Activated CD4-positive, alpha-beta T cell treated with anti-CD3 and anti-CD28 coated beads, Interleukin-2, amount 10 ng/mL, durations not matched to agents 7 days and 5 days (primary cell): ENCODE measurements at regions of chr2 and their contacts with region 1.

Region 1: DNA sequence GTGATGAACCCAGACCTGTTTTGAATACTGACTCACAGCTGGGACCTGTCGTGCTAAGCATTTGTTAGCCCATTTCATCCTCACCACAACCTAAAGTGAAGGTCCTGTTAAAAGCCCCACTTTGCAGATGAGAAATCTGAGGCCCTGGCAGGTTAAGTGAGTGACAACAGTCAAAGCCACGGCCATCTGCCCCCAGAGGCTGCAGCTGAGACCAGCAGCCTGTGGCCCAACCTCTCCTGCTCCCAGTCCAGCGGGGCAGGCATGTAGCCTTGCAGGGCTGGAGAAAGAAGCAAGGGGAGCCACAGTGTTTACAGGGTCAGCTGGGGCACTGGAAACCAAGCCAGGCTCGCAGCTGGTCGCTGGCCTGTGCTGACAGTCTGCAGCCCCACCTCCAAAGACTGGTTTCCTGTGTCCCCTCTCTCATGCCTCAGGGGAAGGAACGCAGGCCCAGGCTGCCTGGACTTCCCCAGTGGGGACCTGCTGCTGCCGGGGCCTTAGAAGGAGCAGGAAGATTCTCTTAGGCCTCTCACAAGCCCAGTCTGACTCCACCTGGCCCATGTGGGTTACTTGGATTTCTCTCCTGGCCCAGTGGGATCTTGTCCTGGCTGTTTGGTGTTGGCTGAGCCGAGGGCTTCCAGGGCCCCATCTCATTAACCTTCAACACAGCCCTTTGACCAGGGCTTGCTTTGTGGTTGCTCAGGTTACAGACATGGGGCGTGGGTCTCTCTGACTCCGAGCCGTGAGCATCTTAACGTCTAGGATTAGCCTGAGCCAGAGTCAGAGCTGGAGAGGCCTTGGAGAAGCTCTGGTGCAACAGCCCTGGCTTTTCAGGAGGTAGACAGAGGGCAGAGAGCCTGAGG is 1.7 kb downstream of the INPP5D start:
- DNase-seq: peak; percentile 37
- H3K4me3 Mint-ChIP-seq: peak overlapping the region; percentile 96
- H3K27ac Mint-ChIP-seq: peak overlapping the region; percentile 98
- H3K4me1 Mint-ChIP-seq: peaks cover 53% of the 10 kb centered on the region
- H3K27me3 Mint-ChIP-seq: no peaks in the 10 kb centered on the region

Region 2: GRCh38 chr2:233075966-233076339 is 14.1 kb after region 1 on chr2:
- CTCF ChIA-PET with region 1: interaction called, 57 read pairs
- POLR2A ChIA-PET with region 1: interaction called, 19 read pairs
- DNase-seq: peak; percentile 59
- H3K4me3 Mint-ChIP-seq: no peak overlapping the region
- H3K27ac Mint-ChIP-seq: no peak overlapping the region
- H3K4me1 Mint-ChIP-seq: peaks cover 39% of the 10 kb centered on the region
- H3K27me3 Mint-ChIP-seq: no peaks in the 10 kb centered on the region

Region 3: GRCh38 chr2:233084488-233084887 is 22.7 kb after region 1 on chr2:
- CTCF ChIA-PET with region 1: interaction called, 57 read pairs
- POLR2A ChIA-PET with region 1: interaction called, 19 read pairs
- DNase-seq: peak; percentile 59
- H3K4me3 Mint-ChIP-seq: peak overlapping the region; percentile 65
- H3K27ac Mint-ChIP-seq: peak overlapping the region; percentile 88
- H3K4me1 Mint-ChIP-seq: peaks cover 79% of the 10 kb centered on the region
- H3K27me3 Mint-ChIP-seq: no peaks in the 10 kb centered on the region

Region 4: DNA sequence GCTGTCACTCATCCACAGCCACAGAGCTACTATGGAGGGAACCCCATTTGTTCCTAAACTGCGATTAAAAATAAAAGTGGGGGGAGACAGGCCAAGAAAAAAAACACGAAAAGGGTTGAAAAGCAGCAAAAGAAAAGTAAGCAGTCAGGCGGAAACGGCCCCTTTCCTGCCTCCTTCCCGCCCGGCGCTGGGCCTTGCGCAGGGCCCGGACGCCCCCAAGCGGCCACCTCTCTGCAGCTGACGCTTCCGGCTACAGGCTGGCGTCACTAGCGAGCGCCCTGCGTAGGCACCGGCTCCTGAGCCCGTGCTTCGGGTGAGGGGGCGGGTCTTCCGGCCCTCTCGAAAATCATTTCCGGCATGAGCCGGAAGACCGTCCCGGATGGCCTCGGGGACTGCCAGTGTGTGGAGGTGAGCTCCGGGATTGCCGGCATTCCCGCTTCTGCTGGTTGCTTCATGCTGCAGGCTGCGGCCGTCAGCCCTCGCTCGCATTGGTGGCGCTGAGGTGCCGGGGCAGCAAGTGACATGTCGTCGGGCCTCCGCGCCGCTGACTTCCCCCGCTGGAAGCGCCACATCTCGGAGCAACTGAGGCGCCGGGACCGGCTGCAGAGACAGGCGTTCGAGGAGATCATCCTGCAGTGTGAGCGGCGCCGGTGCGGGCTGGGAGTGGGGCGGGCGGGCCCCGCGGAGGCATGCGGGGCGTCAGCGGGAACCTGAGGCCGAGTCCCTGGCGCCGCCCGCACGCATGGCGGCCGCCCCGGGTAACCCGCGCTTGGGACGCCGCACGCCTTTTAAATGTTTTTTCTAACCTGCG is 189.7 kb after region 1 on chr2 and contains the start of gene ATG16L1:
- CTCF ChIA-PET with region 1: interaction called, 11 read pairs
- POLR2A ChIA-PET with region 1: interaction called, 4 read pairs
- DNase-seq: peak; percentile 96
- H3K4me3 Mint-ChIP-seq: peak within 1 kb of the TSS; percentile 88
- H3K27ac Mint-ChIP-seq: peak within 1 kb of the TSS; percentile 98
- H3K4me1 Mint-ChIP-seq: peaks cover 75% of the 10 kb centered on the region
- H3K27me3 Mint-ChIP-seq: no peaks in the 10 kb centered on the region
- total RNA-seq, gene ATG16L1: 52.6 to 55.4 TPM